Activated CD4-positive, alpha-beta memory T cell treated with anti-CD3 and anti-CD28 coated beads for 36 hours (primary cell): ENCODE measurements at regions of chr1 and their contacts with region 1.

Region 1: DNA sequence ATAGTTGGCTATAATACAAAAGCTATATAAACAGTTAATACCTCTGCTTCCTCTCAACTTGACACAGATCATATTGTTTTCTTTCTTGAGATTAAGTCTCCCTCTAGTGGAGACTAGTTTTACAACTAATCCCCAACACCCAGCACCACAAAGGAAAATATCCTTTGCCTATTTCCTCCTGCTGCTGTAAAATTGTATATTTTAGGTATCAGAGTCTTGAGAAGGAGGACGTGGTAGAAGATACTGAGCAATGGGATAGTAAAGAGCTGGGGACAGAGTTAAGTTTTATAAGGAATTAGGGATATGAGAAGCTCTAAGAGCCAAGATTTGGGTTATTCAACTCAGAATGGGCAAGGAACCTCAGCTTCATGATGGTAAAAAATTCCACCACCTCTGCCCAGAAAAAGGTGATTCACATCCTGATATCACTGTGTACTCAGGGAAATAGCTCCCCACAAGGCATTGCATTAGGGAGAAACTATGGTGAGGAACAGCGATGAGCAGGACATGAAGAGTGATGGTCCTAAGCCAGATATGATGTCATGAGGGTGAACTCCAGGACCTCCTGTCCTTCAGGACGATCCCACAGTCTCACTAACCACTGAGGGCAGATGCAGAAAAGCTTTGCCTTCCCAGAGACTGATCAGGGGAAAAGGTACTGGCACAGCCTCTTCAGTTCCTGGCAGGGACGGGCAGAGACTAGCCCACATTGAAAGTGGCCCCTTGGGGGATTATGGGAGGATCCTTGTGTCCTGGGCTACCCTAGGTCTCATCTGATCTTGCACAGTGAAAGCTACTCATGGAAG is 14.7 kb upstream of the CFAP126 start:
- DNase-seq: no peak
- H3K4me3 Mint-ChIP-seq: no peak overlapping the region
- H3K27ac Mint-ChIP-seq: peak overlapping the region; percentile 42
- H3K4me1 Mint-ChIP-seq: peaks cover 19% of the 10 kb centered on the region
- H3K27me3 Mint-ChIP-seq: no peaks in the 10 kb centered on the region

Region 2: DNA sequence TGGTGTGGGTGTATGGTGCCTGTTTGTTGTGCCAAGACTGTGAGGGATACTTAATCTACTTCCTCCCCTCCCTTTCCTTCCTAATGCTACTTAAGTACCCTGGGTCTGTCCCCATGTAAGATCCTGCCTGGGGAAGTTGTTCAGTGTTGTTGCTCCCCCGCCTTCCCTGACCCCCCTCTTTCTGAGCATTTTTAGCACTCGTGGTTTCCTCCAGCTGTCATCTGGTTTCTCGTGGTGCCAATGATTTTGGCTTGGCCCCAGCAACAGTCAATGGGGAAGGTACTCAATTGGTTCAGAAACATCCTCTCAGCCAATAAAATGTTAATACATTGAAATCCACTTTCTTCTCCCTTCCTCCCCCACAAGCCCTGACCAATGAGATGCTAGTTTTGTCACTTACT is 197.1 kb before region 1 on chr1:
- CTCF ChIA-PET with region 1: interaction called, 9 read pairs
- POLR2A ChIA-PET with region 1: no interaction called
- intact Hi-C with region 1: loop called (anchors 5 kb)
- DNase-seq: peak; percentile 89
- H3K4me3 Mint-ChIP-seq: peak overlapping the region; percentile 49
- H3K27ac Mint-ChIP-seq: peak overlapping the region; percentile 95
- H3K4me1 Mint-ChIP-seq: peaks cover 81% of the 10 kb centered on the region
- H3K27me3 Mint-ChIP-seq: no peaks in the 10 kb centered on the region

Region 3: GRCh38 chr1:161201828-161202725 is 180.3 kb before region 1 on chr1 and contains the start of gene NDUFS2:
- CTCF ChIA-PET with region 1: interaction called, 22 read pairs
- POLR2A ChIA-PET with region 1: no interaction called
- intact Hi-C with region 1: loop called (anchors 5 kb)
- DNase-seq: peak; percentile 97
- H3K4me3 Mint-ChIP-seq: peak within 1 kb of the TSS; percentile 88
- H3K27ac Mint-ChIP-seq: peak within 1 kb of the TSS; percentile 87
- H3K4me1 Mint-ChIP-seq: peaks cover 59% of the 10 kb centered on the region
- H3K27me3 Mint-ChIP-seq: no peaks in the 10 kb centered on the region
- total RNA-seq, gene NDUFS2: 98.3 to 103 TPM

Region 4: GRCh38 chr1:161235957-161236773 is 146.3 kb before region 1 on chr1:
- CTCF ChIA-PET with region 1: interaction called, 213 read pairs
- POLR2A ChIA-PET with region 1: no interaction called
- intact Hi-C with region 1: no loop called
- DNase-seq: no peak
- H3K4me3 Mint-ChIP-seq: no peak overlapping the region
- H3K27ac Mint-ChIP-seq: no peak overlapping the region
- H3K4me1 Mint-ChIP-seq: no peaks in the 10 kb centered on the region
- H3K27me3 Mint-ChIP-seq: no peaks in the 10 kb centered on the region

Region 5: GRCh38 chr1:161314201-161314981 is 68.0 kb before region 1 on chr1 and contains the start of gene SDHC:
- CTCF ChIA-PET with region 1: interaction called, 14 read pairs
- POLR2A ChIA-PET with region 1: no interaction called
- intact Hi-C with region 1: loop called (anchors 5 kb)
- DNase-seq: peak; percentile 92
- H3K4me3 Mint-ChIP-seq: peak within 1 kb of the TSS; percentile 96
- H3K27ac Mint-ChIP-seq: peak within 1 kb of the TSS; percentile 93
- H3K4me1 Mint-ChIP-seq: peaks cover 18% of the 10 kb centered on the region
- H3K27me3 Mint-ChIP-seq: no peaks in the 10 kb centered on the region
- total RNA-seq, gene SDHC: 212 to 215 TPM

Region 6: DNA sequence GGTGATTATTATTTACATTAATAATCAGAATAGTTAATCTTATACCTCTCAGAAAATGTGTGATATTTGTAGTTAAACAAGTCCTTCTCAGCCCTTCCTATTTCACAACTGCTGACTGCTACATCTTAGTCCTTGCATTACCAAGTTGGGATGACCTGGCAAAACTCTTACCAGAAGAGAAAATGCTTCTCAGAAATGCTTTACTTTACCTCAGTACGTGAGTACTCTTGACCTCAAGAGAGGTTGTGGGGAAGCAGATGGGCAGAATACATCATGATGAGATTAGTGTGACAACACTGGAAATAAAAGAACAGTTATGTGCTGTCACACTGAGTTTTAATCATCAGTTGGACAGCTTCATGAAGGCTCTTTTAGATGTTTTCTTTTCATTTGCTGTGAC is 30.9 kb before region 1 on chr1:
- CTCF ChIA-PET with region 1: interaction called, 14 read pairs
- POLR2A ChIA-PET with region 1: no interaction called
- intact Hi-C with region 1: no loop called
- DNase-seq: no peak
- H3K4me3 Mint-ChIP-seq: no peak overlapping the region
- H3K27ac Mint-ChIP-seq: peak overlapping the region; percentile 25
- H3K4me1 Mint-ChIP-seq: no peaks in the 10 kb centered on the region
- H3K27me3 Mint-ChIP-seq: no peaks in the 10 kb centered on the region

Region 7: GRCh38 chr1:161420763-161421455 is 38.5 kb after region 1 on chr1:
- CTCF ChIA-PET with region 1: no interaction called
- POLR2A ChIA-PET with region 1: no interaction called
- intact Hi-C with region 1: no loop called
- DNase-seq: no peak
- H3K4me3 Mint-ChIP-seq: no peak overlapping the region
- H3K27ac Mint-ChIP-seq: no peak overlapping the region
- H3K4me1 Mint-ChIP-seq: peaks cover 16% of the 10 kb centered on the region
- H3K27me3 Mint-ChIP-seq: peaks cover 5% of the 10 kb centered on the region

Region 8: DNA sequence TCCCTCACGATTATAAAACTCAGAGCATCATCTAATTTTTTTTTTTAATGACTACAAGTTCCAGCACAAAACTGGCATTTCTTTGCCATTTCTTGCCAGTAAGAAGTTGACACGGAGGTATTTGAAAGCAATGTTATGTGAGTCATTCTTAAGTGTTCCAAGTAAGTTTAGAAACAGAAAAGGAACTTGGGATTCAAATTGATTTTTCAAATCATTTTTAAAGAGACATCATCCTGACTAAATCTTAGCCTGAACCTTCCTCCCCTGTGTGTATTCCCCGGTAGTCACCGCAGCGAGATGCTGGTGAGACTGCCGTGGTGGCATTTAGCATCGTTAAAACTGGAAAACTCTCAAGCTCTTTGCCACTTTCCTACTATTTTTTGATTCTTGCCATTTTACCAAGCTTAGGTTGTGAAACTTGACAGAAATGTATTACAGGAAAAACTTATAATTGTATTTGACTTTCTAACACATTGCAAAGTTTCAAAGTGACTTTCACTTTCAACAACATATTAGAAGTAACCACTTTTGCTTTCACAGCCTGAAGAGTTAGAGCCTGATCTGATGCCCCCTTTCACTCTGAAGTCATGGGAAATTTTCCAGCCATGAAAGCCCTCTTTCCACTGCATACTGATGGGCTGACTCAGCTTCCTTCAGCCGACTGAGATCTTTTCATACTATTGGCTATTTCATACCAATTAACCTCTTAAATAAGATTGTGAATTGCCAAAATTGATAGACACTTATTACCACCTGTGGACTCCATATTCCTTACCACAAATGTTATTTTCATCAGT is 579.9 kb after region 1 on chr1:
- CTCF ChIA-PET with region 1: no interaction called
- POLR2A ChIA-PET with region 1: no interaction called
- intact Hi-C with region 1: no loop called
- DNase-seq: peak; percentile 67
- H3K4me3 Mint-ChIP-seq: peak overlapping the region; percentile 73
- H3K27ac Mint-ChIP-seq: peak overlapping the region; percentile 90
- H3K4me1 Mint-ChIP-seq: peaks cover 52% of the 10 kb centered on the region
- H3K27me3 Mint-ChIP-seq: no peaks in the 10 kb centered on the region